ENCODE measurements at regions of chr13 and their contacts with region 1.

Region 1: GRCh38 chr13:25768838-25769237 is 283.0 kb downstream of the SHISA2 start:
- DNase-seq: no peak
- H3K4me3 ChIP-seq: no peak overlapping the region
- H3K27ac ChIP-seq: no peak overlapping the region
- H3K4me1 ChIP-seq: peaks cover 28% of the 10 kb centered on the region
- H3K27me3 ChIP-seq: no peaks in the 10 kb centered on the region
- CTCF ChIP-seq: no peak

Region 2: GRCh38 chr13:25733001-25733491 is 35.8 kb before region 1 on chr13:
- CTCF ChIA-PET with region 1: no interaction called
- dilution Hi-C with region 1: loop called (anchors 5 kb)
- in situ Hi-C with region 1: no loop called
- intact Hi-C with region 1: no loop called
- DNase-seq: peak; percentile 71
- H3K4me3 ChIP-seq: no peak overlapping the region
- H3K27ac ChIP-seq: peak overlapping the region; percentile 57
- H3K4me1 ChIP-seq: peaks cover 32% of the 10 kb centered on the region
- H3K27me3 ChIP-seq: no peaks in the 10 kb centered on the region
- CTCF ChIP-seq: no peak

Measured in mammary epithelial cell (primary cell).